ENCODE measurements at regions of chr12 and their contacts with region 1.

Region 1: DNA sequence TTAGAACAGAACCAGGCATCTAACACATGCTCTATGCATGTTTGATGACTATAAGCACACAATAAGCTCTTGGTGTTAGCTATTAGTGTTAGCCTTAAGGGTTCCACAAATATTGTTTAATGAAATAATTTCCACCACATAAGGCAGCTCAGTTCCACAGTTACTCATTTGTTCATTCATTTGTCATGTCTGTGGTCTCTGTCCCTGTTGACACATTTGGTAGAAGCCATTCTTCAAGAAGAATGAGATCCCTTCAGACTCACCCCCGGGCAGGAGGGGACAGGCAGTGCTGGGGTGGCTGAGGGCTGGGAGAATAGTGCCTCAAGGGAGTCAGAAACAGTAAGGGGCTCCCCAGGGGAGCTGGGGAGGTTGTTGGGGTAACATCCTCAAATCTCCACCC is 3.7 kb upstream of the FAIM2 start:
- H3K4me3 ChIP-seq: no peak overlapping the region
- H3K27ac ChIP-seq: no peak overlapping the region
- H3K4me1 ChIP-seq: peaks cover 5% of the 10 kb centered on the region
- CTCF ChIP-seq: no peak

Region 2: GRCh38 chr12:49950273-49951251 is 43.2 kb after region 1 on chr12 and contains the start of gene AQP2:
- CTCF ChIA-PET with region 1: interaction called, 14 read pairs
- POLR2A ChIA-PET with region 1: interaction called, 10 read pairs
- H3K4me3 ChIP-seq: no peak within 1 kb of the TSS
- H3K27ac ChIP-seq: no peak within 1 kb of the TSS
- H3K4me1 ChIP-seq: no peaks in the 10 kb centered on the region
- CTCF ChIP-seq: no peak

Measured in HEK293 (cell line).